ENCODE measurements at regions of chr10 and their contacts with region 1.

Region 1: GRCh38 chr10:73159038-73159648 is 8.7 kb downstream of the ECD start:
- DNase-seq: peak; percentile 73
- ATAC-seq: peak; percentile 60
- H3K4me3 ChIP-seq: no peak overlapping the region
- H3K4me3 Mint-ChIP-seq: no peak overlapping the region
- H3K27ac ChIP-seq: peak overlapping the region in 1 of 2 donors; percentile 30
- H3K27ac Mint-ChIP-seq: no peak overlapping the region
- H3K4me1 ChIP-seq: peaks cover 0 to 3% of the 10 kb centered on the region in 2 donors
- H3K4me1 Mint-ChIP-seq: peaks cover 29% of the 10 kb centered on the region
- H3K27me3 ChIP-seq: no peaks in the 10 kb centered on the region
- H3K27me3 Mint-ChIP-seq: no peaks in the 10 kb centered on the region
- CTCF ChIP-seq: peak; percentile 97

Region 2: DNA sequence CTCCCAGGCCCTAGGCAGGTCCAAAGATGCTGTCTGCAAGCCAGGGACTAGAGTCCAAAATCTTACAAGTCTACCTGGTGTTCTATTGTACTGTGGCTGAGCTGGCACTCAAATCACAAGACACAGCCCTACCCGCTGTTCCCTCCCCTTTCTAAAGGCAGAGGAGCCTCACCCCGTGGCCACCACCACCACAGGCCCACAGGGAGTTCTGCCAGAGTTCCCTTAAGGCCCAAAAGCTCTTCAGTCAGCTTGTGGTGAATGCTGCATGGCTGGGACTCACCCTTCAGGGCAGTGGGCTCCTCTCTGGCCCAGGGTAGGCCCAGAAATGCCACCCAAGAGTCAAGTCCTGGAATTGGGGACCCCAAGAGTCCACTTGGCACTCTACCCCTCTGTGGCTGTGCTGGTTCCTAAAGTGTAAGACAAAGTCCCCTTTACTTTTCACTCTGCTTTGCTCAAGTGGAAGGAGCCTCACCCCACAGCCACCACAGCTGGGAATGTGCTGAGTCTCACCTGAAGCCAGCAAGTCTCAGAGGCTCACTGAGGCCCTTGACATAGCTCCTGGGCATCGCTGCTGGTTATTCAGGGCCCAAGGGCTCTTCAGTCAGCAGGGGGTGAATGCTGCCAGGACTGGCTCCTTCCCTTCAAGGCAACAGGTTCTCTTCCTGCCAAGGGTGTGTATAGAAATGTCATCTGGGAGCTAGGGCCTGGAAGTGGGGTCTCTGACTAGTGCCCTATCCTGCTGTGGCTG is 1259.3 kb before region 1 on chr10:
- CTCF ChIA-PET with region 1: no interaction called
- POLR2A ChIA-PET with region 1: no interaction called
- intact Hi-C with region 1: no loop called
- DNase-seq: peak; percentile 36
- ATAC-seq: peak; percentile 26
- H3K4me3 ChIP-seq: no peak overlapping the region
- H3K4me3 Mint-ChIP-seq: no peak overlapping the region
- H3K27ac ChIP-seq: no peak overlapping the region
- H3K27ac Mint-ChIP-seq: no peak overlapping the region
- H3K4me1 ChIP-seq: peaks cover 0 to 10% of the 10 kb centered on the region in 2 donors
- H3K4me1 Mint-ChIP-seq: peaks cover 7% of the 10 kb centered on the region
- H3K27me3 ChIP-seq: no peaks in the 10 kb centered on the region
- H3K27me3 Mint-ChIP-seq: no peaks in the 10 kb centered on the region
- CTCF ChIP-seq: no peak

Region 3: DNA sequence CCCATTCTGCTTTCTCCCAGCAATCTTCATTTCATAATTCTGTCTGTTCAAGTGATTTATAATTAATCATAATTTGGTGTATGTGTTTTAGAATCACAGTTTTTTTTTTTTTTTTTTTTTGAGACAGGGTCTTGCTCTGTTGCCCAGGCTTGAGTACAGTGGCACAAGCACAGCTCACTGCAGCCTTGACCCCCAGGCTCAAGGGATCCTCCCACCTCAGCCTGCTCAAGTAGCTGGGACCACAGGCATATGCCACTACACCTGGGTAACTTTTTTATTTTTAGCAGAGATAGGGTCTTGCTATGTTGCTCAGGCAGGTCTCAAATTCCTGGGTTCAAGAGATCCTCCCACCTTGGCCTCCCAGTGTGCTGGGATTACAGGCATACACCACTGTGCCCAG is 155.3 kb before region 1 on chr10:
- CTCF ChIA-PET with region 1: no interaction called
- POLR2A ChIA-PET with region 1: no interaction called
- intact Hi-C with region 1: no loop called
- DNase-seq: no peak
- ATAC-seq: no peak
- H3K4me3 ChIP-seq: no peak overlapping the region
- H3K4me3 Mint-ChIP-seq: no peak overlapping the region
- H3K27ac ChIP-seq: no peak overlapping the region
- H3K27ac Mint-ChIP-seq: no peak overlapping the region
- H3K4me1 ChIP-seq: no peaks in the 10 kb centered on the region
- H3K4me1 Mint-ChIP-seq: no peaks in the 10 kb centered on the region
- H3K27me3 ChIP-seq: no peaks in the 10 kb centered on the region
- H3K27me3 Mint-ChIP-seq: no peaks in the 10 kb centered on the region
- CTCF ChIP-seq: no peak

Region 4: DNA sequence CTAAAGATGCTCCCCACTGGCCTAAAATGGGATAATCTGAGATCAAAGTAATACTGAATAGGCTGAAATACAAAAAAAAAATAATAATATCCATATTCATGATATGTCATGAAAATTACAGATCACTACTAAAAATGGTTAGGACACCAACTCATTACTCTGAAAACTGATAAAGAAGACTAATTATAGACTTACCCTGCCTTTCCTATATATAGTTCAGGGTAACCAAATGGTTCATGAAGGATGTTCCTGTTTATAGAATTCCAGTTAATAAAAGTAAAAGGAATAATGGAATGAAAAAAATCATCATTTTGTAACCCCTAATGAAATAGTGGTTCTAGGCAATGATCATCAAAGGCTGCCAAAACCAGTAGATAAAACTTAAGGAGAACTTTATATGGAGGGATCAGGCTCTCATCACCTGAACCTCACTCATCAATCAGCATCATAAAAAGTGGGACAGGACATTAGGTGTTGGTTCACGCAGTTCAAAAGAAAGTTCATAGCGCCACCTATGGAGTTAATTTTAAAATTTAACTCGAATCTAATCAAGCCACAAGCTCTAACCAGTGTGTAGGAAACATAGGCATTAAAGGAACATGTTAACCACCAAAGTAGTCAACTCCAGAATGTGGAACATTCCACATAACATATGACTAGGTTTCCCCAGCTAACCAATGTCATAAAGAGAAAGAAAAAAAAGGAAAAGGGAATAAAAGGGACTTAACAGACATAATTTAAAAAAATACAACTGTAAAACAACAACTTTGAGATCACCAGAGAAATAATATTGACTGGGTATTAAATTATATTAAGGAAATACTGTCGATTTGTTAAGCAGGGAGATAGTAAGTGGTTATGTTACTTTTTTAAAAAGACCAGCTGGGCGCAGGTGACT is 98.2 kb before region 1 on chr10:
- CTCF ChIA-PET with region 1: interaction called, 12 read pairs
- POLR2A ChIA-PET with region 1: no interaction called
- intact Hi-C with region 1: no loop called
- DNase-seq: peak; percentile 49
- ATAC-seq: no peak
- H3K4me3 ChIP-seq: no peak overlapping the region
- H3K4me3 Mint-ChIP-seq: no peak overlapping the region
- H3K27ac ChIP-seq: no peak overlapping the region
- H3K27ac Mint-ChIP-seq: no peak overlapping the region
- H3K4me1 ChIP-seq: no peaks in the 10 kb centered on the region
- H3K4me1 Mint-ChIP-seq: peaks cover 7% of the 10 kb centered on the region
- H3K27me3 ChIP-seq: no peaks in the 10 kb centered on the region
- H3K27me3 Mint-ChIP-seq: no peaks in the 10 kb centered on the region
- CTCF ChIP-seq: peak; percentile 67

Region 5: DNA sequence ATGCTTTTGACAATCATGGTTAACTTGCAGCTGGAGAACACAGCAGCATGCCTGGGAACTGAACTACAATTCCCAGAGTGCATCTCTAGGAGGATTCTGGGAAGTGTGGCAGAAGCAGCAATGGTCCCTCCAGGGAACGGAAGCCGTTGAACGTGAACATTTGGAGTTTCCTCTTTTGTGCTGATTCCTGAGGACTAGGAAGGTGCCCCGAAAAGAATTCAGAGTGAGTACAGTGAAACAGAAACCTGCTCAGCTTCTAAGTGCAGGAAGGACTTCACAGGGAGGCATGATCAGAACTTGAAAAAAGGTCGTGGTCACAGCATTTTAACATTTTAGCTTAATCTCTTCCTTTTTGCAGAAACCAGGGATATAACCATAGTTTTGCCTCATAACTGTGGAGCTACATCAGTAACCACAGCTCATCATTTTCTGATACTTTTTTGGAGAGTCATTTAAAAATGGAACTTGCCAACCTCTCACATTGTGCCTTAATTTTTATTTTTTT is 48.7 kb before region 1 on chr10 and contains the start of gene NUDT13:
- CTCF ChIA-PET with region 1: interaction called, 11 read pairs
- POLR2A ChIA-PET with region 1: interaction called, 8 read pairs
- intact Hi-C with region 1: no loop called
- DNase-seq: peak; percentile 80
- ATAC-seq: peak; percentile 93
- H3K4me3 ChIP-seq: peak within 1 kb of the TSS; percentile 50 to 79 (median 71)
- H3K4me3 Mint-ChIP-seq: peak within 1 kb of the TSS; percentile 97
- H3K27ac ChIP-seq: peak within 1 kb of the TSS; percentile 26 to 62
- H3K27ac Mint-ChIP-seq: peak within 1 kb of the TSS; percentile 93
- H3K4me1 ChIP-seq: peaks cover 0 to 9% of the 10 kb centered on the region in 2 donors
- H3K4me1 Mint-ChIP-seq: peaks cover 11% of the 10 kb centered on the region
- H3K27me3 ChIP-seq: no peaks in the 10 kb centered on the region
- H3K27me3 Mint-ChIP-seq: no peaks in the 10 kb centered on the region
- CTCF ChIP-seq: no peak
- total RNA-seq, gene NUDT13: 4.5 TPM in 2 replicates